PC-9 (cell line): ENCODE measurements at regions of chr5 and their contacts with region 1.

Region 1: DNA sequence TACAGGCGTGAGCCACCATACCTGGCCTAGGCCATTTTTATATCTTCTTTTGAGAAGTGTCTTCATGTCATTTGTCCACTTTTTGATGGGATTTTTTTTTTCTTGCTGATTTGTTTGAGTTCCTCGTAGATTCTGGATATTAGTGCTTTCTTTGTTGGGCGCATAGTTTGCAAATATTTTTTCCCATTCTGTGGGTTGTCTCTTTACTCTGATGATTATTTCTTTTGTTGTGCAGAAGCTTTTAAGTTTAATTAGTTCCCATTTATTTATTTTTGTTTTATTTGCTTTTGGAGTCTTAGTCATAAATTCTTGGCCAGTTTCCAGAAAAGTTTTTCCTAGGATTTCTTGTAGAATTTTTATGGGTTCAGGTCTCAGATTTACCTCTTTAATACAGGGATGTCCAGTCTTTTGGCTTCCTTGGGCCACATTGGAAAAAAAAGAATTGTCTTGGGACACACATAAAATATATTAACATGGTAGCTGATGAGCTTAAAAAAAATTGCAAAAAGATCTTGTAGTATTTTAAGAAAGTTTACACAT is 122.0 kb downstream of the WDR70 start:
- DNase-seq: no peak
- H3K4me3 ChIP-seq: no peak overlapping the region
- H3K27ac ChIP-seq: no peak overlapping the region
- H3K4me1 ChIP-seq: no peaks in the 10 kb centered on the region; the same call in 1 of the 2 replicates
- H3K27me3 ChIP-seq: no peaks in the 10 kb centered on the region
- CTCF ChIP-seq: no peak

Region 2: DNA sequence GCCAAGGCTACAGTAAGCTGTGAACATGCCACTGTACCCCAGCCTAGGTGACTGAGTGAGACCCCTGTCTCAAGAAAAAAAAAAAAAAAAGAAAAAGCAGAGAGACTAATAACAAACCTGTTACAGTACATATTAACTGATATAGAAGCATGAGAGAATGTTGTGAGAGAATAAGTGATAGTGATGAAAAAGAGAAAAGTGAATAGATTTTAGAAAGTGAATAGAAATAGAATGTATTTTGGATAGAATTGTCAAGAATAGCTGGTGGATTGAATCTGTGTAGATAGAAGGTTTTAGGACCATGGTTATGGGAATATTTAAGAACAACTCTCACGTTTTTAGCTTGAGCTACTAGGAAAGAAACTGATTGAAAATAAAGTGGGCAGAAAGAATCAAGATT is 13.9 kb after region 1 on chr5:
- CTCF ChIA-PET with region 1: no interaction called
- POLR2A ChIA-PET with region 1: interaction called, 11 read pairs
- intact Hi-C with region 1: no loop called
- DNase-seq: no peak
- H3K4me3 ChIP-seq: no peak overlapping the region
- H3K27ac ChIP-seq: no peak overlapping the region
- H3K4me1 ChIP-seq: no peaks in the 10 kb centered on the region
- H3K27me3 ChIP-seq: no peaks in the 10 kb centered on the region
- CTCF ChIP-seq: no peak